IMR-90 (cell line): ENCODE measurements at regions of chr3 and their contacts with region 1.

Region 1: DNA sequence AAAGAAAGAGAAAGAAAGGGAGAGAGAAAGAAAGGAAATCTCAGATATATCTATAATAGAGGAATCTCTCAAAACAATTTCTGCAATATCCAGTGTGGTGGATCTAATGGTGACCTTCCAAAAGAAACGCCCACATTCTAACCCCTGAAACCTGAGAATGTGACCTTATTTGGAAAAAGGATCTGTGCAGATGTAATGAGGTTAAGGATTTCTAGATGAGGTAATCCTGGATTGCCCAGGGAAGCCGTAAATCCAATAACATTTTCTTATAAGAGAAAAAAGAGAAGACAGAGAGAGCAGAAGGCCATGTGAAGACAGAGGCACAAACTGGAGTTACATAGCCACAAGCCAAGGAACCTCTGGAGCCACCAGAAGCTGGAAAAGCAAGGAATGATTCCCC is 307.6 kb downstream of the ZBTB20 start:
- DNase-seq: peak; percentile 27
- ATAC-seq: no peak
- H3K4me3 ChIP-seq: no peak overlapping the region
- H3K27ac ChIP-seq: no peak overlapping the region
- H3K4me1 ChIP-seq: peaks cover 6% of the 10 kb centered on the region
- H3K27me3 ChIP-seq: no peaks in the 10 kb centered on the region
- CTCF ChIP-seq: no peak
- POLR2A ChIP-seq: no peak
- RAD21 ChIP-seq: no peak

Region 2: GRCh38 chr3:113736548-113737089 is 1102.9 kb before region 1 on chr3:
- CTCF ChIA-PET with region 1: no interaction called
- POLR2A ChIA-PET with region 1: no interaction called
- dilution Hi-C with region 1: no loop called
- in situ Hi-C with region 1: no loop called
- intact Hi-C with region 1: no loop called
- DNase-seq: peak; percentile 73
- ATAC-seq: peak; percentile 83
- H3K4me3 ChIP-seq: no peak overlapping the region
- H3K27ac ChIP-seq: no peak overlapping the region
- H3K4me1 ChIP-seq: peaks cover 6% of the 10 kb centered on the region; the same call in 1 of the 2 replicates
- H3K27me3 ChIP-seq: no peaks in the 10 kb centered on the region
- CTCF ChIP-seq: peak; percentile 79
- POLR2A ChIP-seq: peak; percentile 27; the same call in 1 of the 2 replicates
- RAD21 ChIP-seq: peak; percentile 84

Region 3: DNA sequence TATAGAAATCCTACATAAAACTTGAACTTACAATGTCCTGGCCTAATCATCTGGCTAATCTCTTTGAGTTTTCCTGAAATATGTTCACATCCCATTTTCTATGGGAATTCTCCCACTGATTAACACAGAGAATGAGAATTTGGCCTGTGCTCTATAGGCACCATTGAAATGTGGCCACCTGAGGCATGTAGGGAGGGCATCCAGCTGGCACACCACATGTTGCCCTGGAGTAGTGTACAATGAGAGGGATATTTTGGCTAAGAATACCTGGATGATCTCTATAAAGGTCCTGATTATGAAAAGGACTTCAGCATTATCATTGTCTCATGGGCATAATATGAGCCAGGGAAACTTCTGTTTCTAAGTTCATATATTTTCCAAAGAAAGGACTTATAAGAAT is 16.4 kb before region 1 on chr3:
- CTCF ChIA-PET with region 1: no interaction called
- POLR2A ChIA-PET with region 1: no interaction called
- dilution Hi-C with region 1: no loop called
- in situ Hi-C with region 1: no loop called
- intact Hi-C with region 1: no loop called
- DNase-seq: no peak
- ATAC-seq: no peak
- H3K4me3 ChIP-seq: no peak overlapping the region
- H3K27ac ChIP-seq: no peak overlapping the region
- H3K4me1 ChIP-seq: no peaks in the 10 kb centered on the region
- H3K27me3 ChIP-seq: no peaks in the 10 kb centered on the region
- CTCF ChIP-seq: no peak
- POLR2A ChIP-seq: no peak
- RAD21 ChIP-seq: no peak

Region 4: GRCh38 chr3:115169808-115170207 is 330.3 kb after region 1 on chr3:
- CTCF ChIA-PET with region 1: no interaction called
- POLR2A ChIA-PET with region 1: no interaction called
- dilution Hi-C with region 1: no loop called
- in situ Hi-C with region 1: loop called (anchors 10 kb)
- intact Hi-C with region 1: no loop called
- DNase-seq: no peak
- ATAC-seq: no peak
- H3K4me3 ChIP-seq: no peak overlapping the region
- H3K27ac ChIP-seq: no peak overlapping the region
- H3K4me1 ChIP-seq: no peaks in the 10 kb centered on the region; the same call in 1 of the 2 replicates
- H3K27me3 ChIP-seq: no peaks in the 10 kb centered on the region
- CTCF ChIP-seq: peak; percentile 44
- POLR2A ChIP-seq: no peak
- RAD21 ChIP-seq: peak; percentile 28; the same call in 1 of the 2 replicates

Region 5: DNA sequence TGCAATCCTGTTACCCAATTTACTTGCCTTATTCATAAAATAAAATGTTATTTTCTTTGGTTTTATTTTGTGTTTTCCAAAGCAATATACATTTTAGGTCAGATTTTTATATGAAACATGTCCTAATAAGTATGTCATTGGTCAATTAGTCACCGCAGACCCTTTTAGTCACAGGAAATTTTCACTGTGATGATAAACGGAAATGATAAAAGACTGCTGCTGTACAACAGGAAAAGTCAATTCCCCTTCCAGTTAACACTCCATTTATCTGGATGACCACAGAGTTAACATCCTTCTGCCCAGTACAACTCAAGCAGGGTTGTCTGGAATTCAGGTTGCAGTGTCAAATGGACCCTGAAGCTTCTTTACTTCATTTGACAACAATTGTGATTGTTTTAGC is 1430.6 kb after region 1 on chr3:
- CTCF ChIA-PET with region 1: no interaction called
- POLR2A ChIA-PET with region 1: no interaction called
- dilution Hi-C with region 1: no loop called
- in situ Hi-C with region 1: no loop called
- intact Hi-C with region 1: loop called (anchors 5 kb)
- DNase-seq: peak; percentile 22
- ATAC-seq: no peak
- H3K4me3 ChIP-seq: no peak overlapping the region
- H3K27ac ChIP-seq: no peak overlapping the region
- H3K4me1 ChIP-seq: no peaks in the 10 kb centered on the region
- H3K27me3 ChIP-seq: no peaks in the 10 kb centered on the region
- CTCF ChIP-seq: no peak
- POLR2A ChIP-seq: no peak
- RAD21 ChIP-seq: no peak